Activated CD4-positive, alpha-beta T cell treated with anti-CD3 and anti-CD28 coated beads, Interleukin-2, amount 10 ng/mL, durations not matched to agents 24 days and 14 days (primary cell): ENCODE measurements at regions of chr3 and their contacts with region 1.

Region 1: DNA sequence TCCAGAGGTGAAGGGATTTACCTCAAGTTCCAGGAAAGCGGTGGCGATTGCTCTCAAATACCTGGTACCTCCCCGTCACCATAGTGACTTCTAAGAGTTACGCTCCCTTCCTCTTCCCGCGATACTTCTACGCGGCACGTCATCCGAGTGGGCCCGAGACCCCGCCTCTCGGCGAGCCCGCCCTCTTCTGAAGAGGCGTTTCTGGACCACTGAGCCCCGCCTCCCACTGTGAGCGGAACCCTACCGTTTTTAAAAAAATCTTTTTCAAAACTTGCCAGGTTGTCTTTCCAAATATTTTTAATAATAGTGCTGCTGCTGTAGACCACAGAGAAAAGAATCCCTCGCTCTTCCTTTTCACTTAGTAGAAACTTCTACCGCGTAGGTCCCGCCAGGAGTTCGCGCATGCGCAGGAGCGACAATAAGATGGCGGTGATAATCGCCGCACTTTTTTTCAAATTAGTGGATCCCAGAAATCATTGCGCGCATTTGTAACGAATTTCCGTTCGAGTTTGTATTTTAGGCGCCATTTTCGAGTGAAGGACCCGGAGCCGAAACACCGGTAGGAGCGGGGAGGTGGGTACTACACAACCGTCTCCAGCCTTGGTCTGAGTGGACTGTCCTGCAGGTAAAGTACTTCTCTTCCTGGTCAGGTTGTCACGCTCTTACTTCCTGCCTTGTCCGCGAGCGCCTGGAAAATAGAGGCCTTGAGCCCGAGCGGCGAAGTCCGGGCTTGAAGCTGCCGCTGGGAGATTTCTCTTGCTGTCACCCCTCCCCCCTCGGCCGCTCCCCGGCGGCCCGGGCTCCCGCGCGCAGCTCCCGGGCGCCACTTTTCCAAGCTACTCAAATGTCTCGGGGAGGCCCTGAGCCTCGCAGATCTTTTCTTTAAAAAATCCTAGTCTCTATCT is at the starts of genes IFT80 and SMC4:
- DNase-seq: peak; percentile 99
- H3K4me3 Mint-ChIP-seq: peak within 1 kb of the TSS; percentile 96
- H3K27ac Mint-ChIP-seq: peak within 1 kb of the TSS; percentile 97
- H3K4me1 Mint-ChIP-seq: peaks cover 39% of the 10 kb centered on the region
- H3K27me3 Mint-ChIP-seq: peaks cover 4% of the 10 kb centered on the region
- total RNA-seq, gene IFT80: 13.0 and 14.3 TPM in 2 replicates
- total RNA-seq, gene SMC4: 171 and 179 TPM in 2 replicates

Region 2: DNA sequence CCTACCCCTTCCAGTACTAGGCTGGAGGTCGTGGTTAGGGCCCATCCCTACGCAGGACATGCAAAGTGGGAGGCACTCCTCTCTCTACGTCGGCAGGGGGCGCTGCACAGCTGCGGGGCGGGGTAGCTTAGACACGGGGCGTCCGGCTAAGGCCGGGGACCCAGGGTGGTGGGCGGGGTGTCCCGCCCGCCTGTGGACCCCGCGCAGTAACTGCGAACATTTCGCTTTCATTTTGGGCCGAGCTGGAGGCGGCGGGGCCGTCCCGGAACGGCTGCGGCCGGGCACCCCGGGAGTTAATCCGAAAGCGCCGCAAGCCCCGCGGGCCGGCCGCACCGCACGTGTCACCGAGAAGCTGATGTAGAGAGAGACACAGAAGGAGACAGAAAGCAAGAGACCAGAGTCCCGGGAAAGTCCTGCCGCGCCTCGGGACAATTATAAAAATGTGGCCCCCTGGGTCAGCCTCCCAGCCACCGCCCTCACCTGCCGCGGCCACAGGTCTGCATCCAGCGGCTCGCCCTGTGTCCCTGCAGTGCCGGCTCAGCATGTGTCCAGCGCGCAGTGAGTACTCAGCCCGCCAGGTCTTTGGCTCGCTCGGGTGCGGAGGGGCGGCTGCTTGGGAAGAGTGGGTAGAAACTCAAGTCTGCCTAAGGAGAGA is 410.6 kb before region 1 on chr3 and contains the start of gene IL12A:
- intact Hi-C with region 1: loop called (anchors 5 kb)
- DNase-seq: peak; percentile 95
- H3K4me3 Mint-ChIP-seq: peak within 1 kb of the TSS; percentile 74
- H3K27ac Mint-ChIP-seq: peak within 1 kb of the TSS; percentile 26
- H3K4me1 Mint-ChIP-seq: peaks cover 18% of the 10 kb centered on the region
- H3K27me3 Mint-ChIP-seq: peaks cover 22% of the 10 kb centered on the region
- total RNA-seq, gene IL12A: 0.21 and 0.59 TPM in 2 replicates

Region 3: GRCh38 chr3:160225176-160226025 is 174.0 kb before region 1 on chr3 and contains the start of gene C3orf80:
- intact Hi-C with region 1: loop called (anchors 5 kb)
- DNase-seq: peak; percentile 85
- H3K4me3 Mint-ChIP-seq: peak within 1 kb of the TSS; percentile 84
- H3K27ac Mint-ChIP-seq: peak within 1 kb of the TSS; percentile 20
- H3K4me1 Mint-ChIP-seq: peaks cover 16% of the 10 kb centered on the region
- H3K27me3 Mint-ChIP-seq: peaks cover 61% of the 10 kb centered on the region
- total RNA-seq, gene C3orf80: 0.07 TPM in 1 of 2 replicates, not detected in the other

Region 4: DNA sequence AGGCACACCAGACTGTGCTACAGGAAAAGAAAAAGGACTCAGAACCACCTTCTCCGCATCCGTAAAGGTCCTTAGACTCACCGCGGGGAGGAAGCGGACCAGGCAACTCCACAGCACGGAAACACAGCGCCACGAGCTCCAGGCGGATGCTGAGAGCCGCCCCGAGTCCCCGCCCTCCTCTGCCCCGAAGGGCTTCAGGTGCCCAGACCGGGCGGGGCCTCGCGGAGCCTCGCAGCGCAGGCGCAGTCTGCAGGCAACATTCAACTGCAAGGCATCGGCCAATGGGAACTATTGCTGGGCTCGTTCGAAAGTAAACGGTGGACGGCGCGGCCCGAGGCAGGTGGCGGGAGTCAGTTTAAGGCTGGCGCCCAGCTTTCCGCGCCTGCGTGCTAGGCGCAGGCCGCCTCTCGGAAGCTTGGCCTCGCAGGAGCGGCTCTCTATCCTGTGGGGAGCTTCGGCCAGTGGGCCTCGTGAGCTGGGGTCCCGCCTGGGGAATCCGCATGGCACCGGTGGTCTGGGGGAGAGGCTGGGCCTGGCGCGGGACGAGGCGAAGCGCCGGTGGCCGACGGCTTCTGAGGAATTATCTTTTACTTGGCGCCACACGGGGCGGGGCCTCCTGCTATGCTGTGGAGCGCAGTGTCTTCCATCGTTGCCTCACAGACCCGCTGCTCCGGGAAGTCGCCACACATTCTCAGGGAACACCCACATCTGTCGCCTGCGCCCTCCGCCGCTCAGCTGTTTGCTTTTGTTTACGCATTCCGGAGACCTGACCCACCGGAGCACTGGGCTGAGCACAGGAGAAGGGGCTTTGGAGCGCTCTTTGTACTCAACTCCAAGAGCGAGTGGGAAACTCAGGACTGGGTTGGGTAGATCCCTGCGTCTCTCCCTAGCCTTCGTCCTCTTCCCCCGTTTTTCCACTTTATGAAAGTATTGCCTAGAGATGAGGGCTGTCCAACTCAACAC is 50.5 kb after region 1 on chr3 and contains the start of gene TRIM59:
- intact Hi-C with region 1: loop called (anchors 1 kb)
- DNase-seq: peak; percentile 99
- H3K4me3 Mint-ChIP-seq: peak within 1 kb of the TSS; percentile 99
- H3K27ac Mint-ChIP-seq: peak within 1 kb of the TSS; percentile 100
- H3K4me1 Mint-ChIP-seq: peaks cover 29% of the 10 kb centered on the region
- H3K27me3 Mint-ChIP-seq: no peaks in the 10 kb centered on the region
- total RNA-seq, gene TRIM59: 31.8 and 35.0 TPM in 2 replicates

Region 5: DNA sequence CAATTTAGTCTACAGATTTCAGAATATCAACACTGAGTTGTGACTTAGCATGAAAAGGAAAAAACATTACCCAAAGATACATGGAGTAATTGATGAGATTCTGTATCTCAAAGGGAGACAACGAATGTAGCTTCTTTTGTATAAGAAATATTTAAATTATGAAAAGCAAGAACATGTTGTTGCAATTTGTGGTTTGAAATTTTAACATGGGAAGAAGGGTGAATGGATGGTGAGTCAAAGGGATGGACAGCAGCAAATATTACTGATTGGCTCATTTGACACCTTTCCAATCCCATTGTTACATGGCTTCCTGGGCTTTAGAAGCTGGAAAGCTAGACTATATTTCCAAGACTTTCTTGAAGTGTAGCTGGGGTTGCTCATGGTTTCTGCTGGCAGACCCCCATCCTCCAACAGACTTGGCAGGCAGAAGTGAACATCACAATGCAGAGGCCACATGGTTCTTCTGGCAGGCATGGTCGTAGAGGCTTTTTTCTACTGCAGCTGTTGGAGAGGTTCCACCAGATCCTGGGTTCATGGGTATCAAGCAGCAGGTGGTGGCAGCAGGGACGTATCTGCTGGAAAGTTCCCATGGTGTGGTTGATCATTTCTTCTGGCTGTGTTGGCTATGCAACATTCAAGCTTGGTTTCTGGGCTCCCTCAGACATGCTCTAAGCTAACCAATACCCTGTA is 213.2 kb after region 1 on chr3:
- intact Hi-C with region 1: no loop called
- DNase-seq: no peak
- H3K4me3 Mint-ChIP-seq: no peak overlapping the region
- H3K27ac Mint-ChIP-seq: no peak overlapping the region
- H3K4me1 Mint-ChIP-seq: no peaks in the 10 kb centered on the region
- H3K27me3 Mint-ChIP-seq: peaks cover 35% of the 10 kb centered on the region

Region 6: DNA sequence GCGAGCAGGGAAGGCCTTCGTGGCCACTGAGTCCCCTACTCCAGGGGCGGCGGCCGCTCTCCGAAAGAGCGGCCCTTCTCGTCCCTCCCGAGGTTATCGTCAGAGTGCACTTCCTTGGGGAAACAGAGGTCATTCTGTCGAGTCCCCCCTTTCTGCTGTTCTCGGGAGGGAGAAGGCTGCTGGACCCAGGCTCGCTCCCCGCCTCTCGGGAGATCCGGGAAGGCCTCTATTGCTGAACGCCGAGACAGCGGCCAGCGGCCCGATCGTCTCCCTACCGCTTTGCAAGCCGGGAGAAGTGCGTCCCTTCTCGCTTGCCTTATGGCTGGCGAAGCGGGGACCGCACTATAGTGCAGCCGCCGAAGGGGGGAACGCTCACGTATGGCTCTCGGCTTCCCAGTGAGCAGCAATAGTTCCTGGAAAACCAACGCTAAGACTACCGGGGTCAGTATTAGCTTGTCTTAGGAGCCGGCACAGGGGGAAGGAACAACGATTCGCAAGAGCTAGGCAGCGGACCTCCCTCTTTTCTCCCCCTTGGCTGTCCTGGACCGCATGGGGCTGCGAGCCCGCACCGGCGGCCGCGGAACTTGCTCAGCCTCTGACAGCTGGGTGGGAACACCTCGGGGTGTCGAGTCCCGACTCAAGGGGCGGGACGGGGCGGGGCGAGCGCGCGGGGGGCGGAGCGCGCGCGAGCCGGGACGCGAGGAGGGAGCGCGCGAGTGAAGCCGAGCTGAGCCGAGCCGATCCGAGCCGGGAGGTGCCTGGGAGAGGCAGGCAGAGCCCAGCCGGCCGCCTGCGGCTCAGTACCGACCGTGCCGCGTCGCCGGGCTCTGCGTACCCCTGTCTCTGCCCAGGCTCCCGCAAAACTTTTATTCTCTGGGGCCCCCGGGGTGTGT is 355.7 kb after region 1 on chr3:
- intact Hi-C with region 1: loop called (anchors 2 kb)
- DNase-seq: peak; percentile 96
- H3K4me3 Mint-ChIP-seq: peak overlapping the region; percentile 94
- H3K27ac Mint-ChIP-seq: peak overlapping the region; percentile 95
- H3K4me1 Mint-ChIP-seq: peaks cover 26% of the 10 kb centered on the region
- H3K27me3 Mint-ChIP-seq: peaks cover 40% of the 10 kb centered on the region